ENCODE measurements at regions of chr1 and their contacts with region 1.

Region 1: GRCh38 chr1:174999216-174999925 is 376 bp upstream of the CACYBP start:
- DNase-seq: peak; percentile 94
- ATAC-seq: peak; percentile 78
- H3K4me3 Mint-ChIP-seq: no peak overlapping the region
- H3K27ac Mint-ChIP-seq: no peak overlapping the region
- H3K4me1 Mint-ChIP-seq: peaks cover 32% of the 10 kb centered on the region
- H3K27me3 Mint-ChIP-seq: no peaks in the 10 kb centered on the region
- CTCF ChIP-seq: no peak

Region 2: GRCh38 chr1:174769961-174770549 is 229.3 kb before region 1 on chr1:
- CTCF ChIA-PET with region 1: interaction called, 15 read pairs
- POLR2A ChIA-PET with region 1: no interaction called
- DNase-seq: no peak
- ATAC-seq: no peak
- H3K4me3 Mint-ChIP-seq: no peak overlapping the region
- H3K27ac Mint-ChIP-seq: no peak overlapping the region; the same call in 1 of the 2 replicates
- H3K4me1 Mint-ChIP-seq: peaks cover 13% of the 10 kb centered on the region
- H3K27me3 Mint-ChIP-seq: no peaks in the 10 kb centered on the region; the same call in 1 of the 2 replicates
- CTCF ChIP-seq: peak; percentile 54

Region 3: GRCh38 chr1:174982971-174983689 is 16.2 kb before region 1 on chr1:
- CTCF ChIA-PET with region 1: interaction called, 15 read pairs
- POLR2A ChIA-PET with region 1: interaction called, 5 read pairs
- DNase-seq: no peak
- ATAC-seq: no peak
- H3K4me3 Mint-ChIP-seq: no peak overlapping the region
- H3K27ac Mint-ChIP-seq: no peak overlapping the region
- H3K4me1 Mint-ChIP-seq: no peaks in the 10 kb centered on the region
- H3K27me3 Mint-ChIP-seq: no peaks in the 10 kb centered on the region
- CTCF ChIP-seq: peak; percentile 64

Region 4: DNA sequence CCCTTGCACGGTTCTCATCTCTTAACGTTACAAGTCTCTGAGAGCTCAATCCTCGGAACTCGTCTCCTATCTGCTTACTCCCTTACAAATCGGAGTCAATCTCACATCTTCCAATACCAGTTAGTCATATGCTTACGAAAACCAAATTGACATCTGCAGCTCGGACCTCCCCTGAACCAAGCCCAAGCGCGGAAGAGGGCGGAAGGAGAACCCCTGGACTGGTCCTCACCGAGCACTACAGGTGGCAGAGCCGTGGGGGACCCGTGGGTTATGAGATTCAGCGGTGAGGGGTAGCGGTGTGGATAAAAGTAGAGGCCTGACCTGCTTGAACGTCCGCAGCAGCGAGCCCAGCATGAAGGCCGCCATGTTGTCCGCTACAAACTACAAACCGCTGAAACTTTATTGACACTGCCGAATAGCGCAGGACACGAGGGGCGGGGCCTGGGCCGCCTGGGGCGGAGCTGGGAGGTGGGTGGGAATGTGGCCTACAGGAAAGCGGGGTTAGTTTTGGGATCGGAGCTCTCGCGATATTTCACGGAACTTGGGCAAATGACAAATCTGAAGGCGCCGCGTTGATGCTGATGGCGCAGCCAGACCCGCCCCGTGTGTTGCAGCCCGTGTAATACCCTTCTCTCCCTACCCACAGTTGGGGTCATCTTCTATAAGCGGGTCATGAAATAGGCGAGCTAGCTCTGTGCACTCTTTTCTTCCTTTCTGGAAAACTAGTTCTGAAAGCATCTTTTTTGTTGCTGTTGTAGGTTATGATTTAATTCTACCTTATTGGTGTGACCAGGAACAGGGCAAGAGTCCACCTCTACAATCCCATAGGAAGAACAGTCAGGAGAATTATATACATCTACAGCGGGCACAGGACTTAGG is 23.9 kb after region 1 on chr1 and contains the start of gene MRPS14:
- CTCF ChIA-PET with region 1: interaction called, 10 read pairs
- POLR2A ChIA-PET with region 1: interaction called, 27 read pairs
- DNase-seq: peak; percentile 99
- ATAC-seq: peak; percentile 97
- H3K4me3 Mint-ChIP-seq: peak within 1 kb of the TSS; percentile 98
- H3K27ac Mint-ChIP-seq: peak within 1 kb of the TSS; percentile 97
- H3K4me1 Mint-ChIP-seq: peaks cover 4% of the 10 kb centered on the region
- H3K27me3 Mint-ChIP-seq: no peaks in the 10 kb centered on the region
- CTCF ChIP-seq: no peak
- total RNA-seq, gene MRPS14: 30.4 to 33.1 TPM (median 32.1 TPM) in 3 replicates

Measured in WTC11 (cell line).